Gastrocnemius medialis (tissue), 4 donors: ENCODE measurements at regions of chr17 and their contacts with region 1.

Region 1: DNA sequence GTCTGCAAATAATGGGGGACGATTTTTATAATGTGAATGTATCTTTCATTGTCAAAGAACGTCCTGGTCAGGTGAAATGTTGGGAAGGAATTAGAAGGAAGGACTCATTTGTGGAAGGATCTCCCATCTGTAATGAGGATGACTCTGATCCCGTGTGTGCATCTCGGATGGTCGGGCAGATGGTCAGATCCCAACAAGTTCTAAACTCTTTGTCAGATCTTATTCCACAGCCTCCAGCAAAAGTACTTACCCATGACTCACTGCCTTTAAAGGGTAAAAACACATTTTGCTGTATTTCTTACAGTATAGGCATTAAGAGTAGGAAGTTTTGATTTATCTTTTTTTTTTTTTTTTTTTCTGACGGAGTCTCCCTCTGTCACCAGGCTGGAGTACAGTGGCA is 534 bp upstream of the KRTAP4-8 start:
- DNase-seq: no peak
- ATAC-seq: no peak
- H3K4me3 ChIP-seq: no peak overlapping the region
- H3K27ac ChIP-seq: no peak overlapping the region
- H3K4me1 ChIP-seq: no peaks in the 10 kb centered on the region
- H3K27me3 ChIP-seq: no peaks in the 10 kb centered on the region
- CTCF ChIP-seq: no peak
- POLR2A ChIP-seq: no peak

Region 2: DNA sequence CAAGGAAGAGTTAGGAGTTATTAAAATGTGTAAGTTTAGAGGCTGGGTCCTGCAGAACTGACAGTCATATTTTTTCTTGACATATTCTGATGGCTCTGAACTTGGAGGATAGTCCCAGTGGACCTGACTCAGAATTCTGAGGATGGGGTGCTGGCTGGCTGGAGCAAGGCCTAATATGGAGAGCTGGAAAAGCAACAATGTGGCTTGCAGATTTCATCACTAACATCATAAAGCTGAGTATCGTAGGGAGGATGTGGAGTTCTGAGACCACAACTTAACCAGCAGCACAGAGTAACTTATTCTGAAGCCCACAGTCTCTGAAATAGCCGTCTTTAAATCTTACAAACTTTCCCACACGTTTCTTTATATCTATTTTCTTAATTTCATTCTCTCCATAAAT is 73.8 kb before region 1 on chr17:
- in situ Hi-C with region 1: no loop called
- intact Hi-C with region 1: no loop called
- DNase-seq: no peak
- ATAC-seq: no peak
- H3K4me3 ChIP-seq: no peak overlapping the region
- H3K27ac ChIP-seq: no peak overlapping the region
- H3K4me1 ChIP-seq: no peaks in the 10 kb centered on the region
- H3K27me3 ChIP-seq: peaks cover 10 to 16% (median 13%) of the 10 kb centered on the region in 3 donors
- CTCF ChIP-seq: no peak
- POLR2A ChIP-seq: no peak

Region 3: DNA sequence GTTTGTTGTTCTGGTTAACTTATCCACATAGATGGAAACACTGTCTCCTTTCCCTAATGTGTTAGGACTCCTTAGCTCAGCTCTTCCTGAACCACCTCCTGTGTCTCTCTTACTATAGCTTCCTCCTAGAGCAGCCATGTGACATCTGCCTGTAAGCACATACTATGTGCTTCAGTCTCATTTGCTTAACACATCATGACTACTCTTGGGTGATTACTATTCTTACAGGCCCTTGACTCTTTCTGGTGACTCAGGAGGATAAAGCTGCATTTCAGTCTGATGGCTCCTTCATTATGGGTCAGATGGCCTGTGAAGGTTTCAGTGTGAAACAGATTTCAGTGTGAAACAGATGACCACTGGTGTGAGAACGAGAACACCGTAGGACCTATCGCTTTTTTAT is 79.9 kb after region 1 on chr17:
- in situ Hi-C with region 1: loop called in 1 of 4 experiments (anchors 25 kb)
- intact Hi-C with region 1: no loop called
- DNase-seq: no peak
- ATAC-seq: no peak
- H3K4me3 ChIP-seq: no peak overlapping the region
- H3K27ac ChIP-seq: no peak overlapping the region
- H3K4me1 ChIP-seq: no peaks in the 10 kb centered on the region
- H3K27me3 ChIP-seq: no peaks in the 10 kb centered on the region
- CTCF ChIP-seq: no peak
- POLR2A ChIP-seq: no peak